Dendritic cell treated with granulocyte-macrophage colony-stimulating factor and Interleukin-4, amounts not matched to agents 40 ng/mL and 50 ng/mL, for 4 days (primary cell): ENCODE measurements at regions of chr6 and their contacts with region 1.

Region 1: DNA sequence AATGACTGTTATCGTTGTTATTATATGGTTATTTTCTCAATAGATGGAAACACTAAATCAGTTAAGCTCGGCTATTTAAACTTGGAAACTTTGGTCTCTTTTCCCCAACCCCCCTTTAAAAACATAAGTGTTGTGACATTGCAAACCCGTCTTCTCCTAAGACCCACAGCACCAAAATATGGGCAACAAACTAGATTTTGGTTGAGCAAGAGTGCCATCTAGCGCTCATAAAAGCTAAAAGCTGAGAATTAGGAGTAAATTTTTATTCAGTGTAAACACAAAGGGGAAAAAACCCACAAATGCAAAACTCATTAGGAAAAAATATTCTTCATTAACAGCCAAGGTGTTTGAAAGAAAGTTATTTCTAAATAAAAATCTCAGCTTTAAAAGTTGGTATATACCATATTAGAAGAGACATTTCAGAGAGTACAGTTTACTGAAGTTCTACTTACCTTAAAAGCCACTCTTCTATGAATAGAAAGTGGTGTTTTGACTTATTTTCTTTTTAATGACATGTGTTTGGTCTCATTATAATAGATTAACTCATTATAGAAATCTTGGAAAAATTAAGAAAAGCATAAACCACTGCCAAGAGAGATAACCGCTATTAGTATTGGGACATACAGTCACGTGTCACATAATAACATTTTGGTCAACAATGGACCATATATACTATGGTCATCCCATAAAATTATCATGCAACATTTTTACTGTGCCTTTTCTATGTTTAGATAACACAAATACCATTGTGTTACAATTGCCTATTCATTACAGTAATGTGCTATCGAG is 21.1 kb downstream of the SESN1 start:
- H3K4me3 Mint-ChIP-seq: no peak overlapping the region
- H3K27ac Mint-ChIP-seq: no peak overlapping the region
- H3K4me1 Mint-ChIP-seq: peaks cover 10% of the 10 kb centered on the region
- H3K27me3 Mint-ChIP-seq: no peaks in the 10 kb centered on the region

Region 2: GRCh38 chr6:108541838-108542759 is 531.4 kb before region 1 on chr6:
- intact Hi-C with region 1: loop called (anchors 1 kb)
- H3K4me3 Mint-ChIP-seq: no peak overlapping the region
- H3K27ac Mint-ChIP-seq: no peak overlapping the region
- H3K4me1 Mint-ChIP-seq: peaks cover 26% of the 10 kb centered on the region
- H3K27me3 Mint-ChIP-seq: peaks cover 13% of the 10 kb centered on the region

Region 3: GRCh38 chr6:108896111-108896661 is 177.4 kb before region 1 on chr6:
- intact Hi-C with region 1: loop called (anchors 5 kb)
- H3K4me3 Mint-ChIP-seq: no peak overlapping the region
- H3K27ac Mint-ChIP-seq: peak overlapping the region; percentile 76
- H3K4me1 Mint-ChIP-seq: peaks cover 26% of the 10 kb centered on the region
- H3K27me3 Mint-ChIP-seq: peaks cover 7% of the 10 kb centered on the region

Region 4: DNA sequence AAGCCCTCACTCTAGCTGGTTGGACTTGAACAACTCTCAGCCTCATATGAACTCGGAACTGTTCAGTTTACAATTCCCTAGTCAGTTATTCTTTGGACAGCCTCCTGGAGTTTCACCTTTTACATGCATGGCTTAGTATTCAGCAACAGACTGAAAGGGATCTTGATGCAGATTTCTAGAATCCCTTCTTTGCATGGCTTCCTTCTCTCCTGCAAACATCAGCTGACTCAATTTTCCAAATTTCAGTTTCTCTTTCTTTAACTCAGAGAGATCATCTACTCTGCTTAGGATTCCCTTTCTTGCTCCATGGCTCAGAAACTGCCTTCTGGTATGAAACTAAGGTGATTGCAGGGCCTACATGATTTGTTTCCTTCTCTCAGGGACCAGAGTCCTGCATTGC is 121.3 kb after region 1 on chr6:
- intact Hi-C with region 1: no loop called
- H3K4me3 Mint-ChIP-seq: no peak overlapping the region
- H3K27ac Mint-ChIP-seq: no peak overlapping the region
- H3K4me1 Mint-ChIP-seq: peaks cover 10% of the 10 kb centered on the region
- H3K27me3 Mint-ChIP-seq: no peaks in the 10 kb centered on the region